K562 (cell line): ENCODE measurements at regions of chr2 and their contacts with region 1.

Region 1: DNA sequence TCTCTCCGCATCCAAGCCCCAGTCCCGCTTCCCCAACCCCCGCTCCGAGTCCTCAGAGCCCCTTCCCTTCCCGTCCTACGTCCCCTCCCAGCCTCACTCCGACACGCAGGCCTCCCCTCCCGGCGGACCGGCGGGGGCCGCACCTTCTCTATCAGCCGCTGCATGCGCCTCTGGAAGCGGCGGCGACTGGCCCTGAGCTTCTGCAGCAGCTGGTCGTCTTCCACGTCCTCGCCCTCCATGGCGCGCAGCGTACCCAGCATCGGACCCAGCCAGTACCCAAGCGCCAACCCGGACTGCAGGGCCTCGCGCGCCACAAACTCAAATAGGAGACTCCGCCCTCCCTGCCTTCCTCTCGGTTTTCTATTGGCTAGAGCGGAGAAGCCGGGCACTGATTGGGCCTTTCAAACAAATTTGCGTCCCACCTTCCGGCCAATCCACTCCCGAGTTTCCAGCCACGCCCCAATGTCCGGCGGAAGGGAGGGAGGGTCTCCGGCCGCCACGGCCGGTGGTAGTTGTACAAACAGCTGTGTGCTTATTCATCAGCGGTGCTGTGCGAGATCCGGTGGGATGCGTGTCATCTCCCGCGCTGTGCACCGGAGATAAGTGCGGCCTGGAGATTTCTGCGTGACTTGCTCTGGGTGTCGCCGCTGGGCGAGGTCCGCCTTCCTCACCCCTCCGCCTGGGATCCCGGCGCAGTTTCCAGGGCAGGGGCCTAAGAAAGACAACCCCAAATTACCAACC is at the start of gene HJURP:
- DNase-seq: peak; percentile 94 to 98 (median 98)
- ATAC-seq: peak; percentile 94
- H3K4me3 ChIP-seq: peak within 1 kb of the TSS; percentile 98
- H3K27ac ChIP-seq: peak within 1 kb of the TSS; percentile 96
- H3K4me1 ChIP-seq: peaks cover 14 to 21% of the 10 kb centered on the region in 2 experiments; a peak in 4 of 5 replicates
- H3K27me3 ChIP-seq: no peaks in the 10 kb centered on the region
- CTCF ChIP-seq: no peak
- EP300 ChIP-seq: peak; percentile 77
- POLR2A ChIP-seq: peak; percentile 93
- RAD21 ChIP-seq: no peak
- polyA plus RNA-seq, gene HJURP: 13.8 to 19.1 TPM

Region 2: GRCh38 chr2:233915128-233915527 is 60.7 kb after region 1 on chr2:
- CTCF ChIA-PET with region 1: interaction called, 3 read pairs
- POLR2A ChIA-PET with region 1: no interaction called
- in situ Hi-C with region 1: no loop called
- intact Hi-C with region 1: loop called (anchors 2 kb)
- DNase-seq: peak in 2 of 4 experiments; percentile 3 to 8
- ATAC-seq: no peak
- H3K4me3 ChIP-seq: no peak overlapping the region
- H3K27ac ChIP-seq: no peak overlapping the region
- H3K4me1 ChIP-seq: no peaks in the 10 kb centered on the region
- H3K27me3 ChIP-seq: peaks cover 0 to 4% of the 10 kb centered on the region in 2 experiments; a peak in 1 of 5 replicates
- CTCF ChIP-seq: peak in 2 of 3 experiments; percentile 10 to 37; a peak in 3 of 6 replicates
- EP300 ChIP-seq: no peak
- POLR2A ChIP-seq: no peak
- RAD21 ChIP-seq: 0 out of 4 replicates have a peak, but pooled peaks of 1 of the 2 experiments have one; percentile 6

Region 3: DNA sequence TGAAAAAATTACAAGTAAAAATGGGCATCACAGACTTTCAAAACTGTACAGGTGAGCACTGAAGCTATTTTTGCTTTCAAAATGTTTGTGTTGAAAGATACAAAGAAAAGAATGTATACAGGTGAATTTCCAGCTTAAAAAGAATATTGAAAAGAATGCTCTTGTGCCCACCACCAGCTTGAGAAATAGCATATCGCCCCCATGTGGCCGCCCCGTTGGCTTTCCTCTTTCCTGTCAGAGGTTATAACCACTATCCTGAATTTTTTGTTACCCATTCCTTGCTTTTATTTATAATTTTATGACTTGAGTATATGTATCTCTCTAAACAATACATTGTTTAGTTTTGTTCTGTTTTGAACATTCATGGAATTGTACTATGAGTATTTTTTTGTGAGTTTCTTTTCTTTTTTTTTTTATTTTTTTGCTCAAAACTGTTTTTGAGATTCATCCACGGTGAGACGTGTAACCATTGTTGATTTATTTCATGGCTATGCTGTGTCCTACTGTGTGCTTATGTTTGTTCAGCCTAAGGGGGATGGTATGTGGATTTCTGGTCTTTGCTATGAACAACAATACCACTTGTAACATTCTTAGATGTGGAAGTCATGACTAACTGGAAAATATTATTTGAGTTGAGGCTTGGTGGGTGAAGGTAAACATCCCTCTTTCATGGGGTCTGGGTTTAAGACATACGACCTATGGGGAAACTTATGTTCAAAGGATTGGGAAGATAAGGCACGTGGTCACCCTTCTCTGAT is 74.4 kb after region 1 on chr2:
- CTCF ChIA-PET with region 1: interaction called, 6 read pairs
- POLR2A ChIA-PET with region 1: no interaction called
- in situ Hi-C with region 1: no loop called
- intact Hi-C with region 1: loop called (anchors 1 kb)
- DNase-seq: peak; percentile 18 to 37 (median 27)
- ATAC-seq: 0 out of 3 replicates have a peak, but pooled peaks have one; percentile 60
- H3K4me3 ChIP-seq: no peak overlapping the region
- H3K27ac ChIP-seq: no peak overlapping the region
- H3K4me1 ChIP-seq: no peaks in the 10 kb centered on the region
- H3K27me3 ChIP-seq: peaks cover 5 to 35% of the 10 kb centered on the region in 2 experiments; a peak in 4 of 5 replicates
- CTCF ChIP-seq: peak; percentile 35 to 56 (median 51); a peak in 4 of 6 replicates
- EP300 ChIP-seq: no peak
- POLR2A ChIP-seq: no peak
- RAD21 ChIP-seq: peak; percentile 14 to 49; a peak in 2 of 4 replicates

Region 4: GRCh38 chr2:234500394-234501006 is 646.1 kb after region 1 on chr2:
- CTCF ChIA-PET with region 1: interaction called, 3 read pairs
- POLR2A ChIA-PET with region 1: no interaction called
- in situ Hi-C with region 1: no loop called
- intact Hi-C with region 1: loop called (anchors 2 kb)
- DNase-seq: peak in 2 of 4 experiments; percentile 15 to 23
- ATAC-seq: peak; percentile 65
- H3K4me3 ChIP-seq: no peak overlapping the region
- H3K27ac ChIP-seq: no peak overlapping the region
- H3K4me1 ChIP-seq: peaks cover 0 to 19% of the 10 kb centered on the region in 2 experiments; a peak in 2 of 5 replicates
- H3K27me3 ChIP-seq: peaks cover 0 to 13% of the 10 kb centered on the region in 2 experiments; a peak in 3 of 5 replicates
- CTCF ChIP-seq: peak; percentile 34 to 56 (median 35); a peak in 4 of 6 replicates
- EP300 ChIP-seq: no peak
- POLR2A ChIP-seq: no peak
- RAD21 ChIP-seq: peak; percentile 62

Region 5: DNA sequence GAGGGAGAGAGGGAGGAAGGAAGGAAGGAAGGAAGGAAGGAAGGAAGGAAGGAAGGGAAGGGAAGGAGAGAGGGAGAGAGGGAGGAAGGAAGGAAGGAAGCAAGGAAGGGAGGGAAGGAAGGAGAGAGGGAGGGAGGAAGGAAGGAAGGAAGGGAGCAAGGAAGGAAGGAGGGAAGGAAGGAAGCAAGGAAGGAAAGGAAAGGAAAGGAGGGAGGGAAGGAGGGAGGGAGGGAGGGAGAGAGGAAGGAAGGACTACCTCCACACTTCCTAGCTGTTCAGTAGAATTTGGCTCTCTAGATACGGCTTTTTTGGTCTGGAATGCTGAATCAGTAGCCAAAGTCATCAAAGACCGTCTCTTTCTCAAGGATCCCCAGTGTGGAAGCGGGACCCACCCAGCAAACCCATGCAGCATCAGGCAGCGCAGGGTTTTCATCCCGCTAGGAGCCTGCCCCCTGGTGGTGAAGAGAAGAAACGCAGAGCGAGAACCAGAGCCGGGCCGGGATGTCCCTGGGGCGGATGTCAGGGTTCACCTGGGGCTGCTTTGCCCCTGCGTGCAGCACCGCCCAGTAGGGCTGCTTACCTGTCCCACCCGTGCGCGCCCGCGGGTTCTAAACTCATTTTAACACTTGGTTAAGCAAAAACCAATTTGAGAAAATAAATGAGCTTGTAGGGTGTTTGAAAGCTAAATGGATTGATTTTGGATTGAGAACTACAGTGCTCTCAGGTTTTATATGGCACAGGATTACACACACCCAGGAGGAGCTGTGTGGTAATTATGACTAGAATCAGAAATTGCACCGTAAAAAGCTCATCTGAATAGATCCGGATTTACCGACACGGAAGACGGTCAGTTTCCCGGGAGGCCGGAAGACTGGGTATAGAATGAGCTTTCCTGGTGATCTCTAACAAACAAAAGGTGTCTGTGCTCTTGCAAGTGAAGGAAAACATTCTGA is 690.5 kb after region 1 on chr2:
- CTCF ChIA-PET with region 1: interaction called, 4 read pairs
- POLR2A ChIA-PET with region 1: no interaction called
- in situ Hi-C with region 1: loop called (anchors 25 kb)
- intact Hi-C with region 1: loop called (anchors 5 kb)
- DNase-seq: peak; percentile 46 to 64 (median 61)
- ATAC-seq: peak; percentile 86
- H3K4me3 ChIP-seq: no peak overlapping the region
- H3K27ac ChIP-seq: no peak overlapping the region
- H3K4me1 ChIP-seq: no peaks in the 10 kb centered on the region; a peak in 1 of 5 replicates
- H3K27me3 ChIP-seq: no peaks in the 10 kb centered on the region; a peak in 1 of 5 replicates
- CTCF ChIP-seq: peak; percentile 63 to 68 (median 63)
- EP300 ChIP-seq: no peak
- POLR2A ChIP-seq: no peak
- RAD21 ChIP-seq: peak; percentile 29 to 61; a peak in 3 of 4 replicates

Region 6: DNA sequence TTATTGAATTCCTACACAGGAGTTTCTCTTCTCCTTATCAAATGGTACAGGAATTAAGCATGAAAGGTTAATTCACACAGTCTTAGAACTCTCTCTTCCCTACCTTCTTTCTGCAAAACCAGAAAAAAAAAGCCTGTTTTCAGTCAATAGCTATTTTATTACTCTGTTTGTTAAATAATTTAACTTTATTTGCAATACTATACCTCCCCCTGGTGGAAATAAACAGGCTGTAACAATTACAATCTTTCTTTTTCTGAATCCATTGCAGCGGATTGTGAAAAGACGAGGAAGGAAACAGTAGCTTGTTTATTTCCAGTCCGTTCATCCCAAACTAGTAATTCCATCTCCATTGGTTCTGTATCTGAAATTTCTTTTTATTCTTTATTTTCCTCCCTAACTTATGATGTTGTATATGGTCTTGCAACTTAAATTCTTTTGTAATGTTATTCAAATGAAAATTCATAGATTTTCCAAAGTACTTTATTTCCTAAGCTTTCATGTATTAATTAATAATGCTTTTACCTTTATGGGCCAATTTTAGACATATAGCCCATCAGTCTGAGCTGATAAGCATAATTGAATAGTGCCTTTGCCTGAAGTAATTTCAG is 1262.6 kb after region 1 on chr2:
- CTCF ChIA-PET with region 1: no interaction called
- POLR2A ChIA-PET with region 1: no interaction called
- in situ Hi-C with region 1: no loop called
- intact Hi-C with region 1: loop called (anchors 10 kb)
- DNase-seq: peak in 3 of 4 experiments; percentile 8 to 15 (median 10)
- ATAC-seq: no peak
- H3K4me3 ChIP-seq: no peak overlapping the region
- H3K27ac ChIP-seq: no peak overlapping the region
- H3K4me1 ChIP-seq: no peaks in the 10 kb centered on the region; a peak in 1 of 5 replicates
- H3K27me3 ChIP-seq: peaks cover 0 to 6% of the 10 kb centered on the region in 2 experiments; a peak in 2 of 5 replicates
- CTCF ChIP-seq: peak in 1 of 3 experiments; percentile 56; a peak in 3 of 6 replicates
- EP300 ChIP-seq: no peak
- POLR2A ChIP-seq: no peak
- RAD21 ChIP-seq: peak; percentile 48 to 66; a peak in 3 of 4 replicates